ENCODE measurements at regions of chr7 and their contacts with region 1.

Region 1: DNA sequence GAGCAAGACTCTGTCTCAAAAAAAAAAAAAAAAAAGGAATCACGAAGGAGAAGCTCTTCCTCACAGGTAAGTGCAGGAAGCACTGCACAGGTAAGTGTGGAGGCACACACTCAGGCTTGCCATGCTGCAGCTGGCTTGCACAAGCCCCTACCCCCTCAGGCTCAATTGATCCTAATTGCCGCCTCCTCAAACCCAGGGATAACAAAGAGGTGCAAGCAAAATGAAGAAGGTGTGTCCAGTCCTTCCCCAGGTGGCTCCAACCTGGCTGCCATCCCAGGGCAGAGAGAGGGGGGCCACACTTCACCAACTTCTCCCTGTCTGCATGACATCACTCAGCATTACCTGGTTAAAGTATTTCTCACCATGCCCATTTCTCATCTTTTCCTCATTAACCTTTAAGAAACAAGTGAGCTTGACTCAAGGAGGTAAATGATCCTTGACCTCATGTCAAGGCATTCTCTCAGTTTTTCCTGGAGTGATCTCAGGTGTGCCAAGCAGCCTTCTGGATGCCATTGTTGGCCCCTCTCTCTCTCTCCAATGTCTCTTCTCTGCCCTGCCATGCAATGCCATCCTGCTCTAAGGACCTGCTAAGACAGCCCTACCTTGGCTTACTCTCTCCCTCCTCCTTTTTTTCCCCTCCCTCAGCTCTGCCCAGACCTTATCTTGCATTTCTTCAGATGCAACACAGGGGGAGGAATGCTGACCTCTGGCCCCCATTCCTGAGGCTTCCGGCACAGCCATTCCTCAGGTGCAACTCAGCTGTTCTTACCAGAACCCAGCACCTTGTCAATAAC is 13.0 kb upstream of the TRPV6 start:
- DNase-seq: peak in 1 of 2 donors; percentile 74
- H3K4me3 ChIP-seq: no peak overlapping the region
- CTCF ChIP-seq: no peak
- POLR2A ChIP-seq: no peak

Region 2: DNA sequence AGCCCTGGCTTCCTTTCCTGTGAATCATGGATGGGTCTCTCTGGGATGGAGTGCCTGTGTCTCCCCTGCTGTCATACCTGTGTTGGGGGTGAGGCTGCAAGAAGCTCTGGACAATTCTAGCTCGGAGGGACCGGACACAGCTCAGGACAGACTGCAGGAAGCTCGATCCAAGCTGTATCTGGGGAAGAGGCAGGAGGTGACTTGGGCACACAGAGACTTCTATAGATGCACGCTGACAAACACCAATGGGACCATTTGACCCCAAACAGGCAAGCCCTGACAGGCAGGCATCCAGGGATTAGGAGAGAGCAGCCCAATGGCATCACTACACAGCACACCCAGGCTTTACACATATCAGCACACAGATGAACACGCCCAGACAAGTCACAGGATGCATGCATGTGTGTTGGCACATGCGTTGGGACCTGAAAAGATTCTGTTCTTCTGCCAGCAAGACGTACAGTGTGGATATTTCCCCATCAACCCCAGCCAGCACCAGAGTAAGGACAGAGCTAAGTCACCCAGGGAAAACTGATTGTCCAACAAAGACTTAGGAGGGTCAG is 45.2 kb after region 1 on chr7:
- intact Hi-C with region 1: loop called (anchors 5 kb)
- DNase-seq: peak; percentile 72 to 77
- H3K4me3 ChIP-seq: no peak overlapping the region
- CTCF ChIP-seq: no peak
- POLR2A ChIP-seq: no peak

Region 3: DNA sequence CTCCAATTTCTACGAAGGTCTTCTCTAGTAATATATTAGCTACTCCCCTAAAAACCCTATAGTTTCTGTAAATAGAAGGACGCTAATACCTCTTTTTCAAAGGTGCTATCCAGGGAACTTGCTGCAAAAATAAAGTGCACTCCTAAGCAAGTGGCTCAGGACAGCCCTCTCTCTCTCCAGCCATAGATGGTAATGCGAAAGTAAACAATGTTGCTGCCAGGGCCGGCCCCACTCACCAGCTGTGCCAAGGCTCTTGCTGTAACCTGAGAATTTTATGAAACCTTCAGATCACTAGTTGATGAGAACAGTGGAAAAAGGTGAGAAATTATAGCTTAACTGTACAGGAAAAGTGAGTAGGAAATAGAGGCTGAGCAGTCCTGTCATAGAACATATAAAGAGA is 273.8 kb after region 1 on chr7:
- intact Hi-C with region 1: no loop called
- DNase-seq: peak in 1 of 2 donors; percentile 82
- H3K4me3 ChIP-seq: no peak overlapping the region
- CTCF ChIP-seq: no peak
- POLR2A ChIP-seq: no peak

Measured in lower leg skin (tissue), 4 donors.